A673 (cell line): ENCODE measurements at regions of chr3 and their contacts with region 1.

Region 1: DNA sequence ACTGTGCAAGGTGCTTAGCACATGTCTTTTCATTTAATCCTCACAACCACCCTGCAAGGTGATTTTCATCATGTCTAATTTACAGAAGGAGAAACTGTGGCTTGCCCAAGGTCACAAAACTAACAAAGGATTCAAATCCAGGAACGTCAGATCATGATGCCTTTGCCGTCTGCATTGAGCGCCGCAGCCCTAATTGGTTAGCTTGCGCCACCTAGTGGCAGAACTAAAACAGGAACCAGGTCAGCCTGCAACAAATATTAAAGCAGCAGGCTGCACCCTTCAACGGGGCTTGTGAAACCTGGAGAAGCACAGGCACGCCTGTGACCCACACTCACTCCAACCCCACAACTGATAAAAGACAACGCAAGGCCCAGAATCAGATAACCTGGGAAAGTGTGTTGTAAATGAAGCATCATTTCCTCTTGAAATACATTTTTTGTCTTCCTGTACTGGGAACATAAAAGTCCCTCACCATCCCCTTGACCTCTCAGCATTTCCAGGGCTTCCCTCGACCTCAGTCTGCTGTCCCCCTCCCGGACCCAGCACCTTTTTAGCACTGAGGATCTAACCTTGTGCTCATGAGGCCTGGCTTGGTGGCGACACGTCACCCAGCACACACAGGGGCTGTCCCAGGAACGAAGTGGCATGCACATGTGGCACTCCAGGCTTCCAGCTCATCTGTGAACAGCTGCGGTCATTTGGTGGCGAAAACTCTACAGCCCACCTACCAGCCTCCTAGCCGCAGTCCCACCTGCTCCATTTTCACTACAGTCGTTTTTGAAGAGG is 17.3 kb downstream of the DPH3 start:
- DNase-seq: peak; percentile 85
- H3K4me3 ChIP-seq: no peak overlapping the region
- H3K27ac ChIP-seq: no peak overlapping the region
- H3K4me1 ChIP-seq: no peaks in the 10 kb centered on the region
- H3K27me3 ChIP-seq: no peaks in the 10 kb centered on the region
- CTCF ChIP-seq: peak; percentile 97

Region 2: GRCh38 chr3:15629860-15630597 is 617.4 kb before region 1 on chr3:
- CTCF ChIA-PET with region 1: no interaction called
- POLR2A ChIA-PET with region 1: no interaction called
- intact Hi-C with region 1: loop called (anchors 5 kb)
- DNase-seq: peak; percentile 87
- H3K4me3 ChIP-seq: peak overlapping the region; percentile 20
- H3K27ac ChIP-seq: no peak overlapping the region
- H3K4me1 ChIP-seq: peaks cover 22% of the 10 kb centered on the region
- H3K27me3 ChIP-seq: no peaks in the 10 kb centered on the region
- CTCF ChIP-seq: peak; percentile 84

Region 3: DNA sequence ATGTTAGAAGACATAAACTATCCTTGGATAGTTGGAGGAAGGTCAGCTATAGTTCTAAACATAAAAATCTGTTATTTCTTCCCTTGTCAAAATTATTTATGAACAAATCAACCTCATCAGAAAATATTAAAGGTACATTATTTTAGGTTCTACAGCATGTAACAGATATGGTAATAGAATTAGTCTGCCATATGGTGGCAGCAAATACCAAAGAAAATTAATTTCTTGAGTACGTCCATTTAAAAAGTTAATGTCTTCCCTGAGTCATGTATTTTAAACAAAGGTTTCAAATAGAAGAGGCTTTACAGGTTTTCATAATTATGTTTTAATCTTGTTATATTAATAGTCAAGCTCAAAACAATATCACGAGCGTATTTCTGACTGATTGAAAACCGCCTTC is 431.8 kb before region 1 on chr3:
- CTCF ChIA-PET with region 1: no interaction called
- POLR2A ChIA-PET with region 1: no interaction called
- intact Hi-C with region 1: loop called (anchors 2 kb)
- DNase-seq: peak; percentile 64
- H3K4me3 ChIP-seq: no peak overlapping the region
- H3K27ac ChIP-seq: no peak overlapping the region
- H3K4me1 ChIP-seq: no peaks in the 10 kb centered on the region
- H3K27me3 ChIP-seq: no peaks in the 10 kb centered on the region
- CTCF ChIP-seq: peak; percentile 56

Region 4: DNA sequence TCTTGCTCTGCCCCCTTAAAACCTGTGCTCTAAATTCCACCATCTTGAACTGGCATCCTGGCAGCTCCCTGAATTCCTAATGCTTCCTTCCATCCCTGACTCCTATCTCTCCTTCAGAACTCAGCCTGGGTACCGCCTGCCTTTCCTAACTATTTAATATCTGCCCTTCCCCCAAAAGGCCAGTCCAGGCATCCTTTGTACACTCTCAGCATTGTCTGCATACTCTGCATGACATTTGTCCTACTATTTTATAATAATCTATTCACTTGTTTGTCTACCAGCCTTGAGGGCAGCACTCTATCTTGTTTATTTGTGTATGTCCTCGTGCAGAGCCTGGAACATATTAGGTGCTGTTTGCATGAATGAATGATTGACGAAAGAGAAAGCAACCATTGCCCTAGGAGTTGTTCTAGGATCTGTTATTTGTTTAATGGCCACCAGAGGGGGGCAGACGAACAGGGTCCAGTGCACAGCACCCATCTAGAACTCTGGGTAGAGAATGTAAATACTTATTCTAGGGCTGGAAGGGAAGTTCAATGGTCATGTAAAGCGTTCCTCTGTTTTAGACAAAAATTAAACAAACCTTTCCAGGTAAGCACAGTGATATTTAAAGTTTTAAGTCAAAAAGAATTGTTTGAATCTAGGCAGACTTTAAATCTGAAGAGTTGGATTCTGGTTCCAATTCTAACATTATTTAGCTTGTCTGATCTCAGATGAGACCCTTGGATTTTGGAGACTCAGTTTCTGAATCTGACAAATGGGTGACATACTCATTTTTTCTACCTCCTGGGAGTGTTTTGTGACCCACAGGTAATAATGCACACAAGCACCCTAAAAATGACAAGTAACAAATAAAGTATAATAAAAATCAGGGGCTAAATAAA is 198.8 kb before region 1 on chr3:
- CTCF ChIA-PET with region 1: interaction called, 3 read pairs
- POLR2A ChIA-PET with region 1: no interaction called
- intact Hi-C with region 1: loop called (anchors 2 kb)
- DNase-seq: peak; percentile 75
- H3K4me3 ChIP-seq: peak overlapping the region; percentile 22
- H3K27ac ChIP-seq: no peak overlapping the region
- H3K4me1 ChIP-seq: no peaks in the 10 kb centered on the region
- H3K27me3 ChIP-seq: no peaks in the 10 kb centered on the region
- CTCF ChIP-seq: peak; percentile 80

Region 5: DNA sequence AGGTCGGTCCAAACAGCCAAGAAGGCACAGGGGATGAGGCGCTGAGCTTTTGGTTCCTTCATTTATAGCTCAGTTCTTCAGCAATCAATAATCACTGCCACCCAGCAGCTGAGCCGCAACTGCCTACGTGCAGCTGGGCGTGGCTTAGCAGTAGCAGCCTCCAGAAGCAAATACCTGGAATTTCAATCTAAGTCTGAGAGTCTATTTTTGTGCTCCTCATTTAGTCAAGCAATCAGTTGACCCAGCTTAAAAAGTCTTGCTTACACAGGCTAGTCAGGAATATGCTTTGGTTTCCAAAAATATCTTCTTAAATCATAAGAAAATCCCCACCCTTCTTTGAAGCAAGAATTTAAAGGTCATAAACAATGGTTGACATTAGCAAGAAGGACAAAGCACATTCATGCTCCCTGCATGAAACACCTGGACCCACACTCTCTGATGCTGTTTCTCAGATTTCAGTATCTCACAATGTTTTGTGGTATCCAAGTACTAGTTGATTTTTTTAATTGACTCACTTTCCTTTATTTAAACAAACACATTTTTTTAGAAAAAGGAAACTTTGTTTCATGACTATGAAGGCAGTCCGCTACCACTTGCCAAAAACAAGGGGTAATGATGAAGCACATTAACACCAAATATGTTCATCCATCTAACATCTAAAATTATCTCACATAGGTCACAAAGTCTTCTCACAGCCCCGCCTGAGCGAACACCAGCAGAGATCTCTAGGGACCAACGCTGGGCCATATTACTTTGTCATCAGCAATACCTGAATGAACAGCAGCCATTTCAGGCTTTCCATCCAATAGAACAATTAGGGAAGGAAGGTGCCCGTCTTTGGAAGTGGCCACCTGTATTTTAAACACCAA is 123.6 kb after region 1 on chr3:
- CTCF ChIA-PET with region 1: no interaction called
- POLR2A ChIA-PET with region 1: no interaction called
- intact Hi-C with region 1: no loop called
- DNase-seq: no peak
- H3K4me3 ChIP-seq: no peak overlapping the region
- H3K27ac ChIP-seq: no peak overlapping the region
- H3K4me1 ChIP-seq: no peaks in the 10 kb centered on the region
- H3K27me3 ChIP-seq: no peaks in the 10 kb centered on the region
- CTCF ChIP-seq: no peak